ENCODE measurements at regions of chr6 and their contacts with region 1.

Region 1: GRCh38 chr6:47477497-47478232 is at the start of gene CD2AP:
- DNase-seq: peak; percentile 79
- H3K4me3 Mint-ChIP-seq: peak within 1 kb of the TSS; percentile 99
- H3K27ac Mint-ChIP-seq: peak within 1 kb of the TSS; percentile 96
- H3K4me1 Mint-ChIP-seq: peaks cover 45% of the 10 kb centered on the region
- H3K27me3 Mint-ChIP-seq: peaks cover 4% of the 10 kb centered on the region
- total RNA-seq, gene CD2AP: 27.3 and 29.3 TPM in 2 replicates

Region 2: GRCh38 chr6:47309291-47310130 is 168.2 kb before region 1 on chr6 and contains the start of gene TNFRSF21:
- intact Hi-C with region 1: loop called (anchors 2 kb)
- DNase-seq: peak; percentile 75
- H3K4me3 Mint-ChIP-seq: peak within 1 kb of the TSS; percentile 68
- H3K27ac Mint-ChIP-seq: no peak within 1 kb of the TSS
- H3K4me1 Mint-ChIP-seq: peaks cover 16% of the 10 kb centered on the region
- H3K27me3 Mint-ChIP-seq: peaks cover 52% of the 10 kb centered on the region
- total RNA-seq, gene TNFRSF21: 3.5 and 4.2 TPM in 2 replicates

Region 3: GRCh38 chr6:47413752-47414422 is 63.8 kb before region 1 on chr6:
- intact Hi-C with region 1: loop called (anchors 1 kb)
- DNase-seq: peak; percentile 9
- H3K4me3 Mint-ChIP-seq: peak overlapping the region; percentile 77
- H3K27ac Mint-ChIP-seq: peak overlapping the region; percentile 62
- H3K4me1 Mint-ChIP-seq: peaks cover 20% of the 10 kb centered on the region
- H3K27me3 Mint-ChIP-seq: peaks cover 19% of the 10 kb centered on the region

Region 4: DNA sequence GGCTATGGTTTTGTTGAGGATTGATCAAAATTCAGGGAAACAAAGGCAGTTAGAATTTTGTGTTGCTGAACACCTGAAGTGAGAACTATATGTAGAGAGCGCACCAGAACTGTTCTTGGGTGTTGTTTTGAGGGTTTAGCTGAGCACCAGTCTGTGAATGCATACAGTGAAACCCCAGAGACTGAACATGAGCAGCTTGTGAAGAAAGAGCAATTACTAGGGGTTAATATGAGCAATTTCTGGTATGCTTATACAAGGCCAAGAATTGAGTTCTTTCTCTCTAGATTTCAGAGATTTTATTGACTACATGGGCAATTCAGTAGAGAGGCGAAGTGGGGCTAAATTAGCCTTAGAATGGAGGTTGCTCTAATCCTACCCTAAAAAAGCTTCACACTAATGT is 93.8 kb after region 1 on chr6:
- intact Hi-C with region 1: loop called (anchors 5 kb)
- DNase-seq: no peak
- H3K4me3 Mint-ChIP-seq: no peak overlapping the region
- H3K27ac Mint-ChIP-seq: no peak overlapping the region
- H3K4me1 Mint-ChIP-seq: no peaks in the 10 kb centered on the region
- H3K27me3 Mint-ChIP-seq: no peaks in the 10 kb centered on the region

Region 5: GRCh38 chr6:47934023-47934422 is 456.4 kb after region 1 on chr6:
- intact Hi-C with region 1: no loop called
- DNase-seq: no peak
- H3K4me3 Mint-ChIP-seq: no peak overlapping the region
- H3K27ac Mint-ChIP-seq: no peak overlapping the region
- H3K4me1 Mint-ChIP-seq: no peaks in the 10 kb centered on the region
- H3K27me3 Mint-ChIP-seq: no peaks in the 10 kb centered on the region

Region 6: DNA sequence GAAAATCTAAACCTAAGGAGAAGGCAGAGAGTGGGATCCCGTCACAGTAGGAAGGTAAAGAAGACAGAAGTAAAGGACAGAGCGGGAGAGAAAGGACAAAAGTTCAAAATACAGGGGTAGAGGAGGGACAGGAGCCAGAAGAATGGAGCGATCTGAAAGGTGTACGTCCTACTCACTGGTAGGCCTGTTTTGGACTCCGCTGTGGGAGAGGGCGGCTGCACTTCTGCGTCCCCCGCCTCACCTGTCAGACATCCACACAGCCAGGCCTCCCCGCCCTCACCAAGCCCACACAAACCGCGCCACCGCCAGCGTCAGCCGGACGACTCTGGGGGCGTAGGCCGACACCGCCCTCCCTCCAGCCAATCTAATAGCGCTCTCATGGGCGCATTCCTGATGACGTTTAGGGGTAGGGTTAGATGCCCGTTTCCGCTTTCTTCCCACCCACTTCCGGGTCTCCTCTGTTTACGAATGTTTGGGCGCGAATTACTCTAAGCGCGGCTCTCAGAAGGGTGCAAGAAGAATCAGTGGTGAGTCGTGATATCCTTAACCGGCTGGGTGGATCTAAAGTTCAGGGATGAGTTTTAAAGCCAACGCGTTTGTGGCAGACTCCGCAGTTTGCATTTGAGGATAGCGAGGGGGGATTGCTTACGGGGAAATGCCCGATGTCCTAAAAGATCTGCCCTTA is 1985.4 kb after region 1 on chr6 and contains the starts of genes CENPQ and MMUT:
- intact Hi-C with region 1: loop called (anchors 1 kb)
- DNase-seq: peak; percentile 91
- H3K4me3 Mint-ChIP-seq: peak within 1 kb of the TSS; percentile 99
- H3K27ac Mint-ChIP-seq: peak within 1 kb of the TSS; percentile 97
- H3K4me1 Mint-ChIP-seq: peaks cover 57% of the 10 kb centered on the region
- H3K27me3 Mint-ChIP-seq: peaks cover 2% of the 10 kb centered on the region
- total RNA-seq, gene CENPQ: 18.2 and 18.7 TPM in 2 replicates
- total RNA-seq, gene MMUT: 13.0 and 13.4 TPM in 2 replicates